ENCODE measurements at regions of chr3 and their contacts with region 1.

Region 1: DNA sequence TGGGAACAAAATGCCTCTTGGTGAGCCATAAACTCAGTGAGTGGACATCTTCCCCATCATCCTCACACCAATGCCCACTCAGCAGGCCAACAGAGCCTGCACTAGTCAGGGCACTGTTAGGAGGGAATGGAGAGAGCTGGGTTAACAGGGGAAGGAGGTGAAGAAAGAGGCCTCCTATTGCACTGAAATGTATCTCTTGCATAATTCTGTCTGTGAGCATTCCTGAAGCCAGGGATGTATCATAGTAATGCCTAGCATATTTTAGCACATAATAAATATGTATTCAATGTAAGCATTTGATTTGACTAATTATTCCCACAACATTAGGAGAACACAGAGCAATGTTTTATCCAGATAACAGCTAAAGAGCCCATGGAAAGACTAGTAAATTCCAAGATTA is 81.2 kb downstream of the ANO10 start:
- DNase-seq: no peak
- H3K4me3 Mint-ChIP-seq: no peak overlapping the region
- H3K27ac Mint-ChIP-seq: no peak overlapping the region
- H3K4me1 Mint-ChIP-seq: no peaks in the 10 kb centered on the region
- H3K27me3 Mint-ChIP-seq: peaks cover 2% of the 10 kb centered on the region

Region 2: GRCh38 chr3:43442872-43443395 is 97.7 kb before region 1 on chr3:
- intact Hi-C with region 1: no loop called
- DNase-seq: no peak
- H3K4me3 Mint-ChIP-seq: no peak overlapping the region
- H3K27ac Mint-ChIP-seq: no peak overlapping the region
- H3K4me1 Mint-ChIP-seq: peaks cover 4% of the 10 kb centered on the region
- H3K27me3 Mint-ChIP-seq: no peaks in the 10 kb centered on the region

Region 3: GRCh38 chr3:43638594-43639447 is 98.2 kb after region 1 on chr3:
- intact Hi-C with region 1: loop called (anchors 1 kb)
- DNase-seq: peak; percentile 26
- H3K4me3 Mint-ChIP-seq: no peak overlapping the region
- H3K27ac Mint-ChIP-seq: no peak overlapping the region
- H3K4me1 Mint-ChIP-seq: peaks cover 8% of the 10 kb centered on the region
- H3K27me3 Mint-ChIP-seq: peaks cover 11% of the 10 kb centered on the region

Region 4: DNA sequence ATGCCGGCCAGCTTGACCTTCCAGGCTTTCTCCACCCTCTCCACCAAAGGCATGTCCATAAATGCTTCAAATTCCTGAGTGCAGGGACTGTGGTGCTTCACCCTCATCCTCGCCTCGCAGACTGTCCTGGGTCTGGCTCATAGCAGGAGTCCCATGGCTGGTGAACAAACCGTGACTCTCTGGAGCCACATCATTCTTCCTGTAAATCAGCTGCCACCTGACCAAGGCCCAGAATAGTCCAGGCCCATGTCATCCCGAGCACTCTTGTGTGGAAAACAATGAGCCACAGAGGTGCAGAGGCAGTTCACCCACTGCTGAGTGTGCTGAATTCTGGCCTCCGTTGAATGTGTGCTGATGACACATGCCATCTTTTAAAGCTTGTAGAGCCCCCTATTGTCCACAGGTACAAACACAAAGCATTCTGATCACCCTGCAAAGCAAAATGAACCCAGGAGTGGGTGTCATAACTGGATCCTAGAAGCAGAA is 218.7 kb after region 1 on chr3:
- intact Hi-C with region 1: loop called (anchors 10 kb)
- DNase-seq: no peak
- H3K4me3 Mint-ChIP-seq: no peak overlapping the region
- H3K27ac Mint-ChIP-seq: no peak overlapping the region
- H3K4me1 Mint-ChIP-seq: peaks cover 15% of the 10 kb centered on the region
- H3K27me3 Mint-ChIP-seq: peaks cover 11% of the 10 kb centered on the region

Region 5: DNA sequence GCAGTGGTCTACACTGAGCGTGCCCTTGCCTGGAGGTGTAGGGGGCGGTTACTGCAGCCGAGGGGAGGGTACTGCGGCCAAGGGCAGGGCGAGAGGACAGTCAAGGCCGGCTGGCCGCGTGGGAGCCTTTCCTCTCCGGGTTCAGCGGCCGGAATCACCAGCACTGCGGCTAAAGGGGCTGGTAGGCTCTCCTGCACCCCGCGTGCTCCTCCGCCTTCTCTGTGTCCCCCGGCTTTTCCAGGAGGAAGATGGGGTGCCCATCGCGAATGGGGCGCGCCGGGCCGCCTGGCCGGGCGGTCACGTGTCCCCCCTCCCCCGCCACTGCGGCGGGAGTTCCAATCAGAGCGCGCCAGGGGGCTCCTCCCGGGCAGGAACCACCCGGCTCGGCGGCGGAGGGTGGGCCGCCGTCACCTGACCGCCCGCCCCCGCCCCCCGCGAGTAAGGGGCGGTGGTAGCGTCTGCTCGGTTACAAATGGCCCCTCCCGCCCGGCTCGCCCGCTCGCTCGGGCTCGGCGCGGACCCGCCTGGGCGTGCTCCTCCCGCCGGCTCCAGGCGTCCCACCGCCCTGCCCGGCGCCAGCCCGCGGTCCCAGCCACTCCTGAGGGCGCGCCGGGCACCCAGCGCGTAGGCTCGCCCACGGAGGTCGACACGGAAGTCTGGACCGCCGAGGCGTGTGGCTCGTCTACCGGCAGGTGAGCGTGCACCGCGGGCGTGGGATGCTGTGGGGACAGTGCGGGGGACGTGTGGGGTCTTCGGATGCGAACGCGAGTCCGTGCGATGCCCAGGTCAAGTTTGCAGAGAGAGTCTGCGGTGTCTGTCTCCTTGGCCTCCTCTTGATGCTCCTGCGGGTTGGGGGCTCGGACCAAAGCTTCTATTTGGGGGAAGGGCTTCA is 458.5 kb after region 1 on chr3:
- intact Hi-C with region 1: loop called (anchors 10 kb)
- DNase-seq: no peak
- H3K4me3 Mint-ChIP-seq: no peak overlapping the region
- H3K27ac Mint-ChIP-seq: no peak overlapping the region
- H3K4me1 Mint-ChIP-seq: peaks cover 35% of the 10 kb centered on the region
- H3K27me3 Mint-ChIP-seq: peaks cover 75% of the 10 kb centered on the region

Region 6: DNA sequence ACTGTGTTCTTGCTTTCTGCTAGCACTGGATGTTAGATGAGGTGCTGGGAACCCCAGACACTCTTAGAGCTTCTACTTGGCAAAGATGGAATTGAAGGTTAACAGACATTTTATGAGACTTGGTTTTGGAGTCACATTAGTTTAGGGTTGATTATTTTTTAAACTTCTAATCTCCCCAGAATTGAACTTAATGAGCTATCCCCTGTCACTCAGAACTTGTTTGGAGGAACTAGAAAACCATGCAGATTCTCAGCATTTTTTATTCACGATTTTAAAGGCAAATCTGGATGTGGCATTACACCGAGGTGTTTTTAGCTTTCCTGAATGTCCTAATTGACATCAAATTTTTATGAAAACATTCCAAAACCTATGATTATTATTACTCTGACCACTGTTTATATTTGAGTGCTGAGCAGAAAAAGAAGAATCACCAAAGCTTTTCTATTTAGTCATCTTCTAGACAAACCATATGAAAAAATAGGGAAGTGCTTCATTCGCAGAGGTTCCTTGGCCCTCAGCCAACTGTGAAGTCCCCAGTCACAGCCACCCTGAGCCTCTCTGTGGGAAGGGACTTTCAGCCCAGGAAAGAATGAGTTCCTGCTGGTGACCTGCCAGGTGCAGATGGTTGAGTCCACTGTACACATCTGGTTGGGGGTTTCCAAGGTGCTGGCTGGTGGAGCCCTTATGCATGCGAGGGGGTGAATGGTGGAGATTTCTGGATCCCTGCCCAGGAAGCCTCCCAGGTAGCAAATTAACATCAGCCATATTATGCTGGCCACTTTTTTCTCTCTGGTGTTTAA is 505.1 kb after region 1 on chr3:
- intact Hi-C with region 1: no loop called
- DNase-seq: no peak
- H3K4me3 Mint-ChIP-seq: no peak overlapping the region
- H3K27ac Mint-ChIP-seq: no peak overlapping the region
- H3K4me1 Mint-ChIP-seq: peaks cover 10% of the 10 kb centered on the region
- H3K27me3 Mint-ChIP-seq: peaks cover 10% of the 10 kb centered on the region

Region 7: GRCh38 chr3:44235604-44236484 is 695.2 kb after region 1 on chr3:
- intact Hi-C with region 1: loop called (anchors 1 kb)
- DNase-seq: peak; percentile 25
- H3K4me3 Mint-ChIP-seq: no peak overlapping the region
- H3K27ac Mint-ChIP-seq: no peak overlapping the region
- H3K4me1 Mint-ChIP-seq: peaks cover 7% of the 10 kb centered on the region
- H3K27me3 Mint-ChIP-seq: peaks cover 5% of the 10 kb centered on the region

Measured in activated T-helper 1 cell treated with anti-CD3 and anti-CD28 coated beads, Interleukin-12 subunit alpha, Interleukin-12 subunit beta, Interleukin-2, Interleukin-4 antibody, amounts not matched to agents 30 ng/mL and 10 ng/mL and 1 ng/mL, durations not matched to agents 14 hours and 24 hours and 36 hours (primary cell).